ENCODE measurements at regions of chr20 and their contacts with region 1.

Region 1: DNA sequence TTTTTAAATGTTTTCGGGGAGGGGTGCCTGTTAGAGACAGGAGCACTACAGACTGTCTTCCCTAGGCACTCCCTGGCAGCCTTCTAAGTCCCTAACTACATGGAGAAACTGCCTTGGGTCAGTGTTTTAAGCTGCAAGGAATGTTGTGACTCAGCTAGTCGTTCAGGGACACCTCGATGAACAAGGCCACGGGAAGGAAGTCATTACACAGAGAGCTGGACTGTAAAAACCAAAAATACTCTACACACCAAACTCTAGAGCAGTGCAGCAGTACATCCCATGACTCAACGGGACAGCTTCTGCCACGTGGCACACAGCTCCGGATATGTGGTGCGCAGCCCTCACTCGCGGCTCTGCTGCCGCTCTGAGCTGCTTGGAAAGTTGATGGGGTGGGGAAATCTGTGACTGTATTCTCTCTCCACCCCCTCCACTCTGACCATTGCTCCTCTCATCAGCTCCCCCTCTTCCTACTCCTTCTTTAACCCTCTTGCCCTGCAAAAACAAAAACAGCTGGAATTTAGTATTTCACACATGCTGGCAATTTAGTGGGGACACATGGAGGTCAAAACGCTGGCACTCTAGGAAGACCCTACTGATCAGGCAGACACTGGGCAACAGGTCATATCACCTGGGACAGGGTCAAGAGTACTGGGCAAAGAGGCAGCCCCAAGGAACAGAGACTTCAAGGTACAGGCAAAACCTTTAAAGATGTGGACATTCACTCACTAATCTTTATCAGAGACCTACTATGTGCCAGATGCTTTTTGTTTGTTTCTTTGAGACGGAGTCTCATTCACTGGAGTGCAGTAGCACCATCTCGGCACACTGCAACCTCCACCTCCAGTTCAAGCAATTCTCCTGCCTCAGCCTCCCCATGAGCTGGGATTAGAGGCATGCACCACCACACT is 10.9 kb upstream of the LPIN3 start:
- DNase-seq: peak; percentile 25 to 57 (median 38)
- ATAC-seq: peak; percentile 98
- H3K4me3 ChIP-seq: no peak overlapping the region
- H3K4me3 Mint-ChIP-seq: peak overlapping the region in 5 of 10 donors; percentile 35 to 64 (median 40)
- H3K27ac ChIP-seq: no peak overlapping the region
- H3K27ac Mint-ChIP-seq: peak overlapping the region in 2 of 9 donors; percentile 37 to 80
- H3K4me1 ChIP-seq: peaks cover 0 to 17% of the 10 kb centered on the region in 2 donors
- H3K4me1 Mint-ChIP-seq: peaks cover 5 to 19% (median 14%) of the 10 kb centered on the region in 7 donors
- H3K27me3 ChIP-seq: no peaks in the 10 kb centered on the region
- H3K27me3 Mint-ChIP-seq: peaks cover 0 to 4% (median 0%) of the 10 kb centered on the region in 5 donors

Region 2: DNA sequence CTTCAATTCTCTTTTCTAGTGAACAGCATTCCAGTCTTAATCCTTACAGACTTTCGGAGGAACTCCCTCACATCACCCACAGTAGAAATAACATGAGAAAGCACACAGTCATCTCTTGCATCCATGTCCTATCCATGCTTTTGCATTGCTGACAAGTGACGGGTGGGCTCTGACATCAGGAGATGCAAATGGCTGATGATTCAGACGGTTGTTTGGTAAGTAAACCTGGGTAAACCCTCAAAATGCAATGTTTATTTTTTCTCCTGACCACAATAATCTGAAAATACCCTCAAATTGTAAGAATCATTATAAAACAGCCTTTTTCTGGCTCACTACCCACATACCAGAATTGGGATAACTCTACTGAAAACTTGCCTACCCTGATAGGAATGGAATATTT is 1432.6 kb before region 1 on chr20:
- CTCF ChIA-PET with region 1: no interaction called
- POLR2A ChIA-PET with region 1: no interaction called
- intact Hi-C with region 1: no loop called
- DNase-seq: no peak
- ATAC-seq: no peak
- H3K4me3 ChIP-seq: no peak overlapping the region
- H3K4me3 Mint-ChIP-seq: no peak overlapping the region
- H3K27ac ChIP-seq: no peak overlapping the region
- H3K27ac Mint-ChIP-seq: no peak overlapping the region
- H3K4me1 ChIP-seq: no peaks in the 10 kb centered on the region
- H3K4me1 Mint-ChIP-seq: no peaks in the 10 kb centered on the region
- H3K27me3 ChIP-seq: no peaks in the 10 kb centered on the region
- H3K27me3 Mint-ChIP-seq: peaks cover 0 to 13% (median 0%) of the 10 kb centered on the region in 5 donors

Region 3: GRCh38 chr20:41317536-41318270 is 12.0 kb before region 1 on chr20 and contains the start of gene ZHX3:
- CTCF ChIA-PET with region 1: no interaction called
- POLR2A ChIA-PET with region 1: interaction called, 4 read pairs
- intact Hi-C with region 1: loop called (anchors 1 kb)
- DNase-seq: peak; percentile 90 to 97 (median 95)
- ATAC-seq: peak; percentile 99
- H3K4me3 ChIP-seq: peak within 1 kb of the TSS; percentile 47
- H3K4me3 Mint-ChIP-seq: peak within 1 kb of the TSS; percentile 74 to 92 (median 84)
- H3K27ac ChIP-seq: peak within 1 kb of the TSS; percentile 75
- H3K27ac Mint-ChIP-seq: peak within 1 kb of the TSS; percentile 48 to 87 (median 84)
- H3K4me1 ChIP-seq: no peaks in the 10 kb centered on the region
- H3K4me1 Mint-ChIP-seq: peaks cover 11 to 34% (median 28%) of the 10 kb centered on the region in 7 donors
- H3K27me3 ChIP-seq: no peaks in the 10 kb centered on the region
- H3K27me3 Mint-ChIP-seq: peaks cover 0 to 7% (median 0%) of the 10 kb centered on the region in 5 donors
- total RNA-seq, gene ZHX3: 7.9 to 12.8 (median 9.8) TPM

Measured in naive thymus-derived CD4-positive, alpha-beta T cell (primary cell).